PC-9 (cell line): ENCODE measurements at regions of chr15 and their contacts with region 1.

Region 1: GRCh38 chr15:77118882-77119321 is 48.0 kb upstream of the TSPAN3 start:
- DNase-seq: peak in 1 of 2 experiments; percentile 33
- H3K4me3 ChIP-seq: no peak overlapping the region
- H3K27ac ChIP-seq: no peak overlapping the region
- H3K4me1 ChIP-seq: no peaks in the 10 kb centered on the region
- H3K27me3 ChIP-seq: no peaks in the 10 kb centered on the region
- CTCF ChIP-seq: peak; percentile 87

Region 2: GRCh38 chr15:76576523-76577279 is 542.2 kb before region 1 on chr15:
- CTCF ChIA-PET with region 1: no interaction called
- POLR2A ChIA-PET with region 1: no interaction called
- intact Hi-C with region 1: no loop called
- DNase-seq: peak in 1 of 2 experiments; percentile 12
- H3K4me3 ChIP-seq: no peak overlapping the region
- H3K27ac ChIP-seq: no peak overlapping the region
- H3K4me1 ChIP-seq: no peaks in the 10 kb centered on the region
- H3K27me3 ChIP-seq: no peaks in the 10 kb centered on the region
- CTCF ChIP-seq: no peak

Region 3: DNA sequence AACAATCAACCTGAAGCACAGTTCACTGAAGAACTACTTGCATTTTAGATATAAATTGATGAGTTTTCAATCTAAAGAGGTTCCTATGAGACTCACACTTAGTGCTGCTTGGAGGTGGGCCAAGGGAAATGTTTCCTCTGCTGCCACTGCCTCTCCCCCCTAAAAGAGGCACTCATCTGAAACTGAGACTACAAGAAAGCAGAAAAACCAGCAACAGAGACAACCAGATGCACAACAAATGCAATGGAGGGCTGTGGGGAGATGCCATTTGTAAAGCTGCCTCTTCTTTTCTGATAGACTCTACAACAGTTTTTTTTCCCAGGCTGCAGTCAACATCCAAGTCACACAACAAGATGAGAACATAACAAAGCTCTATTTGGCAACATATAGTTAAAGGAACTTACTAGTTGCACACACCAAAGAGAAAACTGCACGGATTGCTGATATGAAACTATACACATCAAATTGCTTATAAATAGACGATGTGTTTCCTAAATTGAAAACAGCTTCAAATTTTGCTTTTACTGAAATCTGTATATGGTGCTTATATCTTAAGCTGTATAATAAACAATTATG is 59.0 kb before region 1 on chr15:
- CTCF ChIA-PET with region 1: interaction called, 12 read pairs
- POLR2A ChIA-PET with region 1: no interaction called
- intact Hi-C with region 1: no loop called
- DNase-seq: no peak
- H3K4me3 ChIP-seq: no peak overlapping the region
- H3K27ac ChIP-seq: no peak overlapping the region
- H3K4me1 ChIP-seq: peaks cover 47% of the 10 kb centered on the region
- H3K27me3 ChIP-seq: no peaks in the 10 kb centered on the region
- CTCF ChIP-seq: no peak

Region 4: DNA sequence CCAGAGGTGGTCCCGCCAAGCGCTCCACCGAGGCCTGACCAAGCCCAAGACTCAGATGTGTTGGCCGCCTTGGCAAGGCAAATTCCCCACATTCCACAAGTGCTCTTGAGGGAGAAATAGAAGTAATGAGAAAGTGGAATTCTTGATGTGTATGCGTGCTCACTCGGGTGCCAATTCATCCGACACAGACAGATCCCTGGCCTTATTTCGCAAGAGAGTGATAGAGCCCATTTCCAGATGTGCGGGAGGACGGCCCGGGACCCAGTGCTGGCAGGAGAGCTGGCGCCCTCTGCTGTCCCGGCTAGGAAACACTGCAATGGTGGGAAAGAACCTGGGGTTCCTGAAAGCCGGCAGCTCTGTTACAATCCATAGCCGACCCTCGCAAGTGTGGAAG is 377.8 kb after region 1 on chr15:
- CTCF ChIA-PET with region 1: interaction called, 6 read pairs
- POLR2A ChIA-PET with region 1: no interaction called
- intact Hi-C with region 1: loop called (anchors 1 kb)
- DNase-seq: peak; percentile 48 to 71
- H3K4me3 ChIP-seq: no peak overlapping the region
- H3K27ac ChIP-seq: no peak overlapping the region
- H3K4me1 ChIP-seq: peaks cover 26% of the 10 kb centered on the region; the same call in 1 of the 2 replicates
- H3K27me3 ChIP-seq: no peaks in the 10 kb centered on the region
- CTCF ChIP-seq: peak; percentile 83

Region 5: DNA sequence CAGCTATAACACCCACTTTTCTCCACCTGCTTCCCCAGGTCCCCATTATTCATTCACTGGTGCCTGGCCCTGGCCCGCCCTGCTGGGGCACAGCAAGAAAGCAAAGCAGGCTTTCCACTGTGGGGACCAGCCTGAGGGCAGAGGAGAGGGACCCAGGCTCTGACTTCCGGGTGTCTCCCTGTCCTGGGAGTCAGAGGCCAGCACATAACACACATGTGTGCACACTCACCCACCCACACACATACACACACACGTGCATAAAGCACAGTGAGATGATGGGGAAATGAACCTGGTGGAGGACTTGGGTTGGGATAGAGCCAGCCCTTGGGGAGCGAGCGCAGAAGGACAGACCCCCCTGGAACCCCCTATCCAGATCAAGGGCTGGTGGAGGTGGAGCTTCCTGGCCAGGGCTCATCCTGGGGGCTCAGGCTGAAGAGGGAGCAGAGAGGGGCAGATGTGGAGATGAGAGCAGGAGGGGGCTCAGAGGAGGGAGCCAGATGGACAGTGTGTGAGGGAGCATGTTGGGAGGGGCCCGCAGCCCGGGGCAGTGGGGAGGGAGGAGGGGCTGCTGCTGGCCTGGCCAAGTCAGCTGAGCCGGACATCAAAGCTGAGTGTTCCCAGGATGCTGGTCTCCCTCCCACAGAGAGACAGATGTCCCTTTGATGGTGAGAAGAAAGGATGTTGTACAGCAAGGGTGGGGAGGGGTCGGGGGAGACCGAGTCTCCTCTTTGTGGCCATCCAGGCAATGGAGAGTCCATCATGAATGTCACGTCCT is 435.6 kb after region 1 on chr15:
- CTCF ChIA-PET with region 1: no interaction called
- POLR2A ChIA-PET with region 1: no interaction called
- intact Hi-C with region 1: no loop called
- DNase-seq: no peak
- H3K4me3 ChIP-seq: no peak overlapping the region
- H3K27ac ChIP-seq: no peak overlapping the region
- H3K4me1 ChIP-seq: no peaks in the 10 kb centered on the region
- H3K27me3 ChIP-seq: no peaks in the 10 kb centered on the region; the same call in 1 of the 2 replicates
- CTCF ChIP-seq: no peak

Region 6: GRCh38 chr15:77786956-77787355 is 668.1 kb after region 1 on chr15:
- CTCF ChIA-PET with region 1: no interaction called
- POLR2A ChIA-PET with region 1: no interaction called
- intact Hi-C with region 1: no loop called
- DNase-seq: no peak
- H3K4me3 ChIP-seq: no peak overlapping the region
- H3K27ac ChIP-seq: no peak overlapping the region
- H3K4me1 ChIP-seq: no peaks in the 10 kb centered on the region
- H3K27me3 ChIP-seq: peaks cover 92% of the 10 kb centered on the region
- CTCF ChIP-seq: no peak